ENCODE measurements at regions of chr5 and their contacts with region 1.

Region 1: DNA sequence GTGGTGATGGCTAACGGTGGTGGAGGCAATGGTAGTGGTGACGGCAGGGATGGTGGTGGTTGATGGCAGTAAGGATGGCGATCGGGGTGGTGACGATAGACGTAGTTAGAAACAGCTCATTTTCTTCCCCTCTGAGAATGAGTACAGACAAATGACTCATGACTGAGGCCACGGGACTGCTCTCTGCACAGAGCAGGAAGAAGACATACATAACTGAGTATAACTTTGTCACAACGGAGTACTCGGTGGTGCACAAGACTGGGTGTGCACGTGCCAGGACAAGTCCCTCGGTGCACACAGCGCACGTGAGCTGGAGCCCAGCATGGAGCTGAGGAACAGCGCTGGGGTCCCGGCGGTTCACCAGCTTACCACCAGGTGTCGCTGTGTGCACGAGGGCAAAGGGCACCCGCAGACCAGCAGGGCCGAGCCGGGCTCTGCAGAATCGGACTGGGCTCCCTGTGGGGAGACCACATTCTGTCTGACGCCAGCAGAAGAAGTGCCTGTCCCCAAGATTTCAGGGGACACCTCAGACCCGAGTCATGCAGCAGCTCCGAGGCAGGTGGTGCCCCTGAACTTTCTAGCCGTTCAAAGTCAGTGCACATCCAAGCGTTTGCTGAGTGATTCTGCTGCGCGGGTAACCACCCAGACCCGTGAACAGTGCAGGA is 188.6 kb downstream of the FSTL4 start:
- DNase-seq: peak; percentile 39 to 57 (median 44)
- H3K4me3 ChIP-seq: no peak overlapping the region
- H3K4me3 Mint-ChIP-seq: peak overlapping the region in 1 of 2 donors; percentile 12
- H3K27ac ChIP-seq: no peak overlapping the region
- H3K27ac Mint-ChIP-seq: peak overlapping the region in 1 of 7 donors; percentile 29
- H3K4me1 ChIP-seq: no peaks in the 10 kb centered on the region
- H3K4me1 Mint-ChIP-seq: peaks cover 4% of the 10 kb centered on the region
- H3K27me3 ChIP-seq: no peaks in the 10 kb centered on the region
- H3K27me3 Mint-ChIP-seq: peaks cover 14 to 27% (median 14%) of the 10 kb centered on the region in 3 donors
- CTCF ChIP-seq: peak; percentile 90

Region 2: DNA sequence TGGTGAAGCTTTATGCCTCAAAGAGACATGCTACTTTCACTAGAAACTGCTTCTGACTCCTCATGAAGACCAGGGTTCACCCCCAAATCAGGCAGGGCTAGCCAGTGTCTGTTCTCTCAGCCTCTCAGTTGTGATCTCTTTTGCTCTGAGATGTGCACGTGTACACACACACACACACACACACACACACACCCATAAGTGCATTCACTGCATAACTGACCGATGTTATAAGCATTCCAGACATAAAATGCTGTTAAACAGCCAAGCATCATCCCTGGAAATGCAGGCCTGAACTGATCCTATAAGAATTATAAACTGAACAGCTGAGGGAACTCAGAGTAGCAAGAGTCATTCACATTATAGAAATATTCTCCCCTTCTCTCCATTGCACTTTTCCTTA is 103.6 kb after region 1 on chr5:
- intact Hi-C with region 1: loop called in 1 of 2 experiments (anchors 10 kb)
- DNase-seq: no peak
- H3K4me3 ChIP-seq: no peak overlapping the region
- H3K4me3 Mint-ChIP-seq: no peak overlapping the region
- H3K27ac ChIP-seq: no peak overlapping the region
- H3K27ac Mint-ChIP-seq: peak overlapping the region in 2 of 7 donors; percentile 10 to 12
- H3K4me1 ChIP-seq: no peaks in the 10 kb centered on the region
- H3K4me1 Mint-ChIP-seq: peaks cover 2% of the 10 kb centered on the region
- H3K27me3 ChIP-seq: no peaks in the 10 kb centered on the region
- H3K27me3 Mint-ChIP-seq: peaks cover 2 to 6% (median 3%) of the 10 kb centered on the region in 3 donors
- CTCF ChIP-seq: no peak

Region 3: DNA sequence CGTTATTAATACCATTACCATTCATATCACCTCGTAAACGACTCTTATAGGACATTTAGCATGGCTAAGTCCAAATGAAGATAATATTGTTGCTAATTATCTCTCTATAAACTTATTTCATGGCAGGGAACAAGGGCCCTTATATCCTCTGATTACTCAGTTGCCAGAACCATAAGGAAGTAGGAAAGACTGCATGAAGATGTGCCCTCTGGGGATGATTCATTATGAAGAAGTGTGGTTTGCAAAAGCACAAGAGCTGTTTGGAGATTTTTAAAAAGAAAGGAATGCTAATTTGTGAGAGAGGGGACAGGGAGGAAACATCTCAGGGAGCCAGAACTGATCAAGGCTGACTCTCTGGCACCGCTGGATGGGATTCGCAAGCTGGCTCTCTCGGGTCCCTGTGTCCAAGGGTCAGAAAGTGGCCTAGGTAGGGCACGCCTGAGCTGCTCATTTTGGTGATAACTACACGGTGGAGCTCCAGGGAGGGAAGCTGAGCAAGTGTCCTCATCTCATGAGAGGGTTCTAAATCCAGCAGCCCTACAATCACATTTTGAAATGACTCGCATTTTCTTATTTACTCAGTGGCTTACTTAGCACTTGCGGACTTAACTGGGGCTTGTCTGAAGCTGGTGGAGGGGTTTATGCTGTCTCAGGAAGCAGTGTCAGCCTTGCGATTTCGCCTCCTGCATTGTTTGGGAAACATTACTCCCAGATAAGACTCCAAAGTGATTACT is 407.9 kb after region 1 on chr5:
- intact Hi-C with region 1: no loop called
- DNase-seq: no peak
- H3K4me3 ChIP-seq: no peak overlapping the region
- H3K4me3 Mint-ChIP-seq: no peak overlapping the region
- H3K27ac ChIP-seq: no peak overlapping the region
- H3K27ac Mint-ChIP-seq: no peak overlapping the region
- H3K4me1 ChIP-seq: no peaks in the 10 kb centered on the region
- H3K4me1 Mint-ChIP-seq: no peaks in the 10 kb centered on the region
- H3K27me3 ChIP-seq: peaks cover 0 to 4% of the 10 kb centered on the region in 2 donors
- H3K27me3 Mint-ChIP-seq: peaks cover 0 to 3% (median 0%) of the 10 kb centered on the region in 3 donors
- CTCF ChIP-seq: no peak

Region 4: GRCh38 chr5:133868946-133869518 is 445.3 kb after region 1 on chr5:
- intact Hi-C with region 1: loop called (anchors 5 to 10 kb)
- DNase-seq: peak; percentile 15 to 65 (median 25)
- H3K4me3 ChIP-seq: no peak overlapping the region
- H3K4me3 Mint-ChIP-seq: no peak overlapping the region
- H3K27ac ChIP-seq: no peak overlapping the region
- H3K27ac Mint-ChIP-seq: no peak overlapping the region
- H3K4me1 ChIP-seq: no peaks in the 10 kb centered on the region
- H3K4me1 Mint-ChIP-seq: peaks cover 5% of the 10 kb centered on the region
- H3K27me3 ChIP-seq: peaks cover 0 to 2% of the 10 kb centered on the region in 2 donors
- H3K27me3 Mint-ChIP-seq: peaks cover 7 to 18% (median 9%) of the 10 kb centered on the region in 3 donors
- CTCF ChIP-seq: peak; percentile 77

Measured in CD14-positive monocyte (primary cell).